Posterior vena cava (tissue), 2 donors: ENCODE measurements at regions of chr6 and their contacts with region 1.

Region 1: GRCh38 chr6:133916650-133917151 is 27.8 kb downstream of the TCF21 start:
- DNase-seq: peak; percentile 96

Region 2: GRCh38 chr6:132820629-132821381 is 1095.9 kb before region 1 on chr6:
- intact Hi-C with region 1: loop called in 1 of 2 experiments (anchors 10 kb)
- DNase-seq: no peak

Region 3: DNA sequence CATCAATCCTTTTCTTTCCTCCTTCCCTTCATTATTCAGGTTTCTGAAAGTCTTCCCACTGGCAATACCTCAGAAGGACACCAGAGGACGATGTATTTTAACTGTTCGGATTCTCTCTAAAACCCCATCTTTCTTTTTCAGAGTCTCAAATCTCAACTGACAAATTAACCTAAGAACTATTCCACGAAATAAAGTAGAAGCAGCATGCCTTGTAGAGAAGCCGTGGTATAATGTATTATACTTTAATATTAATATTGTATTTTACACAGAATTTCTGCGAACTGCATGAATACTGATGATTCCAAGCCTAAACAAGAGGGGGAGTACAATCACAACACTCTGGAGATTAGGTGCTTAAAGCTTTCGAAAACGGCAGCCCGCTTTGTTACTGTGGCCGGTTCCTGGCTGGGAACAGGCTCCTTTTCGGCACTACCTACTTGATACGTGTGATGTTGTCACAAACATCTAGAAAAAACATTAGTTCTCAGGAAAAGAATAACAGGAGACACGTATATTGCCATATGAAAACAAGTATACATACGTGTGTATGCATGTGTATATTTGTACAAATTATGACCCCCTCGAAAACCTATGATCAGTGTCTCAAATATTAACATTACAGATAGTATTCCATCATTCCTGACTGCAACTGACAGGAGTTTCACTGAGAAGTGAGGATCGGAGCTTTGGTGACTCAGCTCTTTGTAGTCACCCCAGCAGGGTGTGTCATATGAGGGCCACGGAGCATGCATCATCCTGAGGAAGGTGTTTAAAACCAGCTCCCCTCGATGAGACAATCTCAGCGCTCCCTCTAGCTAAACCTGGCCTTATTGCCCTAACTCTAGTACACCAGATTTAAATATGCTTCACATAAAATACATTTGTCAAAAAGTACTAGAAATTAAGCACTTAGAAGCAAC is 347.5 kb before region 1 on chr6:
- intact Hi-C with region 1: loop called (anchors 2 to 5 kb)
- DNase-seq: no peak